SK-N-SH (cell line): ENCODE measurements at regions of chr22 and their contacts with region 1.

Region 1: GRCh38 chr22:17830043-17830961 is 56.0 kb upstream of the BID start:
- DNase-seq: peak; percentile 92
- H3K4me3 ChIP-seq: peak overlapping the region in 1 of 2 experiments; percentile 17; a peak in 1 of 4 replicates
- H3K27ac ChIP-seq: no peak overlapping the region; a peak in 1 of 4 replicates
- H3K4me1 ChIP-seq: peaks cover 0 to 9% of the 10 kb centered on the region in 2 experiments; a peak in 1 of 4 replicates
- H3K27me3 ChIP-seq: no peaks in the 10 kb centered on the region
- CTCF ChIP-seq: peak; percentile 97
- EP300 ChIP-seq: no peak
- RAD21 ChIP-seq: peak; percentile 98

Region 2: DNA sequence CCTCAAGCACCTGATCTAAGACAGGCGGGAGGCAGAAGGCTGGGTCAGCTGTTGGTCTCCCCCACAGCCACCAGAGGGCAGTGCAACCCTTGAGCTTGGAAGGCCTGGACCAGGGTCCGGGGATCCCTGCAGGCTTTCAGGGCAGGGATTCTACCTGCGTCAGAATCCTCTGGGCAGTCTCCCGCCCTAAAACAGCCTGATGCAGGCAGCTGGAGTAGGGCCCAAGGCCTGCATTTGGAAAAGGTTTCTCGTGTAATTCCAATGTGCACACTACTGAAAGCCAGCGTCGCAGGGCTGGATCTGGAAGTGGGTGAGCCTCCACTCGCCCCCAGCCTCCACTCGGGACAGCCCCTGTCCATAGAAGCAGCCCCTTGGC is 87.8 kb before region 1 on chr22:
- CTCF ChIA-PET with region 1: interaction called, 17 read pairs
- POLR2A ChIA-PET with region 1: no interaction called
- DNase-seq: peak; percentile 93
- H3K4me3 ChIP-seq: no peak overlapping the region
- H3K27ac ChIP-seq: no peak overlapping the region
- H3K4me1 ChIP-seq: peaks cover 0 to 2% of the 10 kb centered on the region in 2 experiments; a peak in 1 of 4 replicates
- H3K27me3 ChIP-seq: no peaks in the 10 kb centered on the region
- CTCF ChIP-seq: peak; percentile 76
- EP300 ChIP-seq: no peak
- RAD21 ChIP-seq: peak; percentile 86

Region 3: DNA sequence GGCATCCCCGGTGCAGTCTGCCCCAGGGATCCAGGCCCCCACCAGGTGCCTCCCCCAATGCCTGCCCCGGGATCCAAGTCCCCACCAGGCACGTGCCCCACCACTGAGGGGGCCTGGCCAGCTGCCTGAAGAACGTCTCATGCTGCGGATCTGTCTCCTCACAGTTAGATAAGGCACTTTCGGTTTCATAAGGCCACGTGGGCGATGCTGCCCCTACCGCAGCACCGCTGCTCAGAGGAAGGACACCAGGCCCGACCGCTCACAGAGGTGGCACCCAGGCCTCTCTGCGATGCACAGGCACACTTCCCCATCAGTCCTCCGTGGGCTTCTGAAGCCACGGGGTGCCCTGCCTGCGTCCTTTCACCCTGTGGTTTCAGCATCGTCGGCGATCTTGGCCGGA is 12.1 kb after region 1 on chr22:
- CTCF ChIA-PET with region 1: interaction called, 45 read pairs
- POLR2A ChIA-PET with region 1: no interaction called
- DNase-seq: no peak
- H3K4me3 ChIP-seq: no peak overlapping the region
- H3K27ac ChIP-seq: no peak overlapping the region
- H3K4me1 ChIP-seq: peaks cover 0 to 34% of the 10 kb centered on the region in 2 experiments; a peak in 1 of 4 replicates
- H3K27me3 ChIP-seq: no peaks in the 10 kb centered on the region
- CTCF ChIP-seq: no peak
- EP300 ChIP-seq: no peak
- RAD21 ChIP-seq: no peak

Region 4: DNA sequence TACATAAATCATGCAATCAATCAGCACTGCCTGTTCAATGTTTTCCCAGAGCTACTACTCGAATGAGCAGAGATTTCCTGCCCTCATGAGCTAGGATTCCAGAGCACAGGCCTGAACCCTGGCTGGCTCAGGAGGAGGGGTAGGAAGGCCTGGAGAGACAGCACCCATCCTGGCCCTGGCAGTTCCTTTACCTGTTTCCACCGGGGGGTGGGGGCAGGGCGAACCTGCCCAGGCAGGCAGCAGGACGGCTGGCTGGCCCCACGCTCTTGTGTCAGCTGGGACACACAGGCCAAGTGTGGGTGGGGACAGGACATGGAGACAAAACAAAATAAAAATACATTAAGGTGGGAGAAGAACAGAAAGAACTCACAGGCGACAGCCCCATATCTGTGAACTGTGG is 53.8 kb after region 1 on chr22:
- CTCF ChIA-PET with region 1: interaction called, 112 read pairs
- POLR2A ChIA-PET with region 1: no interaction called
- DNase-seq: no peak
- H3K4me3 ChIP-seq: no peak overlapping the region
- H3K27ac ChIP-seq: no peak overlapping the region
- H3K4me1 ChIP-seq: peaks cover 0 to 4% of the 10 kb centered on the region in 2 experiments; a peak in 1 of 4 replicates
- H3K27me3 ChIP-seq: no peaks in the 10 kb centered on the region
- CTCF ChIP-seq: no peak
- EP300 ChIP-seq: no peak
- RAD21 ChIP-seq: no peak

Region 5: GRCh38 chr22:17903564-17904295 is 73.4 kb after region 1 on chr22:
- CTCF ChIA-PET with region 1: interaction called, 23 read pairs
- POLR2A ChIA-PET with region 1: no interaction called
- DNase-seq: peak; percentile 49
- H3K4me3 ChIP-seq: no peak overlapping the region
- H3K27ac ChIP-seq: peak overlapping the region in 1 of 2 experiments; percentile 24; a peak in 1 of 4 replicates
- H3K4me1 ChIP-seq: peaks cover 0 to 20% of the 10 kb centered on the region in 2 experiments; a peak in 1 of 4 replicates
- H3K27me3 ChIP-seq: no peaks in the 10 kb centered on the region
- CTCF ChIP-seq: no peak
- EP300 ChIP-seq: no peak
- RAD21 ChIP-seq: peak; percentile 38; the same call in 1 of the 2 replicates

Region 6: GRCh38 chr22:17943533-17944249 is 113.4 kb after region 1 on chr22:
- CTCF ChIA-PET with region 1: interaction called, 12 read pairs
- POLR2A ChIA-PET with region 1: no interaction called
- DNase-seq: no peak
- H3K4me3 ChIP-seq: no peak overlapping the region
- H3K27ac ChIP-seq: peak overlapping the region in 1 of 2 experiments; percentile 78; a peak in 2 of 4 replicates
- H3K4me1 ChIP-seq: peaks cover 0 to 85% of the 10 kb centered on the region in 2 experiments; a peak in 2 of 4 replicates
- H3K27me3 ChIP-seq: no peaks in the 10 kb centered on the region
- CTCF ChIP-seq: no peak
- EP300 ChIP-seq: no peak
- RAD21 ChIP-seq: no peak

Region 7: GRCh38 chr22:18024276-18024947 is 194.1 kb after region 1 on chr22 and contains the start of gene MICAL3:
- CTCF ChIA-PET with region 1: interaction called, 33 read pairs
- POLR2A ChIA-PET with region 1: no interaction called
- DNase-seq: peak; percentile 93
- H3K4me3 ChIP-seq: peak within 1 kb of the TSS; percentile 79 to 84
- H3K27ac ChIP-seq: peak within 1 kb of the TSS; percentile 39 to 62; a peak in 3 of 4 replicates
- H3K4me1 ChIP-seq: peaks cover 0 to 10% of the 10 kb centered on the region in 2 experiments; a peak in 1 of 4 replicates
- H3K27me3 ChIP-seq: no peaks in the 10 kb centered on the region
- CTCF ChIP-seq: peak; percentile 63
- EP300 ChIP-seq: no peak; a peak in 1 of 4 replicates
- RAD21 ChIP-seq: peak; percentile 64
- polyA plus RNA-seq, gene MICAL3: 50.9 and 83.1 TPM in 2 replicates